Activated T-helper 2 cell treated with anti-CD3 and anti-CD28 coated beads, Interferon-gamma antibody, Interleukin-2, Interleukin-4, amounts not matched to agents 10 μg/mL and 5 μg/mL and 100 μg/mL, durations not matched to agents 14 hours and 24 hours and 36 hours (primary cell): ENCODE measurements at regions of chr12 and their contacts with region 1.

Region 1: GRCh38 chr12:68331869-68332727 is at the start of gene MDM1:
- DNase-seq: peak; percentile 95
- H3K4me3 Mint-ChIP-seq: peak within 1 kb of the TSS; percentile 87
- H3K27ac Mint-ChIP-seq: peak within 1 kb of the TSS; percentile 36
- H3K4me1 Mint-ChIP-seq: peaks cover 29% of the 10 kb centered on the region
- H3K27me3 Mint-ChIP-seq: peaks cover 7% of the 10 kb centered on the region
- total RNA-seq, gene MDM1: 13.1 and 14.8 TPM in 2 replicates

Region 2: DNA sequence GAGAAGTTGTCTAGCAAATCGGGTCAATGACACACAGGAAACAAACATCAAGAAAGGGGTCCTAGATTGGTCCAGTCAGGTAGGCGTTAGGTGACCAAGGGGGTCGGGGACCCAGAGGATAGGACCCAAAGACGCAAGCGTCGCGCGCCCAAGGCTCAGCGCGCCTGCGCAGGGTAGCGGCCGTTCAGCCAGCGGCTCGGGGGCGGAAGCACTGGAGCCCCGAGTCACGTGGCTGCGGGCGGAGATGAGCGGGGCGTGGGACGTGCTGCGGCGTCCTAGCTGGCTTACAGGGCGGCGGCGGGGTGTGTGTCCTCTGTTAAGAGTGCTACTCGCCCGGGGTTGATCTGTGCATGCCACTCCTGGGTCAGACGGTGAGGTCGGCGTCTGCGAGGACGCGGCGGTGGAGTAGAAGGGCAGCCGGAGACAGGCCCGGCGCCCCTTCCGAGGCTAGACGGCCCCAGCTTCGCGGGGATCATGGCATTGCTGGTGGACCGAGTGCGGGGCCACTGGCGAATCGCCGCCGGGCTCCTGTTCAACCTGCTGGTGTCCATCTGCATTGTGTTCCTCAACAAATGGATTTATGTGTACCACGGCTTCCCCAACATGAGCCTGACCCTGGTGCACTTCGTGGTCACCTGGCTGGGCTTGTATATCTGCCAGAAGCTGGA is 413.9 kb after region 1 on chr12 and contains the start of gene SLC35E3:
- intact Hi-C with region 1: loop called (anchors 1 kb)
- DNase-seq: peak; percentile 91
- H3K4me3 Mint-ChIP-seq: peak within 1 kb of the TSS; percentile 92
- H3K27ac Mint-ChIP-seq: peak within 1 kb of the TSS; percentile 88
- H3K4me1 Mint-ChIP-seq: peaks cover 35% of the 10 kb centered on the region
- H3K27me3 Mint-ChIP-seq: no peaks in the 10 kb centered on the region
- total RNA-seq, gene SLC35E3: 6.3 and 9.4 TPM in 2 replicates